Heart right ventricle (tissue), 16 donors: ENCODE measurements at regions of chr3 and their contacts with region 1.

Region 1: GRCh38 chr3:25427942-25428788 is at the start of gene RARB:
- DNase-seq: peak; percentile 59 to 84
- ATAC-seq: peak; percentile 91 to 95 (median 92)
- H3K4me3 ChIP-seq: peak within 1 kb of the TSS; percentile 56 to 81 (median 65)
- H3K27ac ChIP-seq: peak within 1 kb of the TSS; percentile 79 to 97 (median 94)
- H3K4me1 ChIP-seq: peaks cover 2 to 26% (median 15%) of the 10 kb centered on the region in 9 donors
- H3K27me3 ChIP-seq: peaks cover 0 to 32% (median 0%) of the 10 kb centered on the region in 7 donors
- CTCF ChIP-seq: no peak
- total RNA-seq, gene RARB: 8.6 to 23.2 (median 19.0) TPM

Region 2: DNA sequence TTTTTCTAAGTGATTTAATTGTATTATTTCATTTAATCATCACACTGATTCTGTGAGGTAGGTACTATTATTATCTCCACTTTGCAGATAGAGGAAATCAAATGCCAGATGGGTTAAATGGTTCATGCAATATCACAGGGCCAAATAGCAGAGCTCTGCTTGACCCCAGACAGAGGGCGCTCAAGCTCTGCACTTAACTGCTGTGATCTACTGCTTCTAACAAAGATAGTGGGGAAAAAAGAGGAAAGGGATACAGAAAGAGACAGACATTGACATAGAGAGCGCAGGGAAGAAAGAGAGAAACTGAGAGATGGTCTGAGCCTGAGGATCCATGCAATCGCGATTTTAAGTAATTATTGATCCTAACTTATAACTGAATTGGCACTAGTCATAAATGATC is 654.4 kb before region 1 on chr3:
- intact Hi-C with region 1: loop called in 1 of 10 experiments (anchors 5 kb)
- DNase-seq: peak; percentile 20 to 41
- ATAC-seq: peak; percentile 41 to 75 (median 60)
- H3K4me3 ChIP-seq: no peak overlapping the region
- H3K27ac ChIP-seq: no peak overlapping the region
- H3K4me1 ChIP-seq: no peaks in the 10 kb centered on the region
- H3K27me3 ChIP-seq: no peaks in the 10 kb centered on the region
- CTCF ChIP-seq: peak; percentile 57 to 86 (median 77)

Region 3: DNA sequence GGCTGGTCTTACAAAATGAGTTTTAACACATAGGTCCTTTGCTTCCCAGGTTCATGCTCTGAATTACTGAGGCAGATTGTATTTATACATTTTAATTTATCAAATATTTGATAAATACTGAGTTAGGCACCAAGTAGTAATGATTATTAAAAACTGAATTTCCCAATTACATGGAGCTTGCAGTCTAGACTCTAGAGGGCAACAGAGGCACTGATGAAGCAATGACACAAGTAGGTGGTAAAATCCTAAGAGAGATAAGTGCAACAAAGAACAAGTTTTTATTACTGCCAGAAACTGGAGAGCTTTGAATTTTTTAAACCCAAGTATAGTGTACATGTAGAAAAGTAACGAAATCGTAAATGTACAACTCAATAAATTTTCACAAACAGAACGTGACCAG is 406.3 kb before region 1 on chr3:
- intact Hi-C with region 1: loop called in 1 of 10 experiments (anchors 10 kb)
- DNase-seq: no peak
- ATAC-seq: peak in 4 of 8 donors; percentile 44 to 61 (median 59)
- H3K4me3 ChIP-seq: no peak overlapping the region
- H3K27ac ChIP-seq: no peak overlapping the region
- H3K4me1 ChIP-seq: no peaks in the 10 kb centered on the region
- H3K27me3 ChIP-seq: no peaks in the 10 kb centered on the region
- CTCF ChIP-seq: peak in 8 of 9 donors; percentile 30 to 74 (median 62)

Region 4: GRCh38 chr3:25044762-25045710 is 383.1 kb before region 1 on chr3:
- intact Hi-C with region 1: loop called in 2 of 10 experiments (anchors 10 kb)
- DNase-seq: peak in 1 of 2 donors; percentile 29
- ATAC-seq: peak; percentile 56 to 91 (median 85)
- H3K4me3 ChIP-seq: no peak overlapping the region
- H3K27ac ChIP-seq: peak overlapping the region in 9 of 10 donors; percentile 7 to 72 (median 24)
- H3K4me1 ChIP-seq: peaks cover 0 to 59% (median 27%) of the 10 kb centered on the region in 9 donors
- H3K27me3 ChIP-seq: no peaks in the 10 kb centered on the region
- CTCF ChIP-seq: no peak

Region 5: DNA sequence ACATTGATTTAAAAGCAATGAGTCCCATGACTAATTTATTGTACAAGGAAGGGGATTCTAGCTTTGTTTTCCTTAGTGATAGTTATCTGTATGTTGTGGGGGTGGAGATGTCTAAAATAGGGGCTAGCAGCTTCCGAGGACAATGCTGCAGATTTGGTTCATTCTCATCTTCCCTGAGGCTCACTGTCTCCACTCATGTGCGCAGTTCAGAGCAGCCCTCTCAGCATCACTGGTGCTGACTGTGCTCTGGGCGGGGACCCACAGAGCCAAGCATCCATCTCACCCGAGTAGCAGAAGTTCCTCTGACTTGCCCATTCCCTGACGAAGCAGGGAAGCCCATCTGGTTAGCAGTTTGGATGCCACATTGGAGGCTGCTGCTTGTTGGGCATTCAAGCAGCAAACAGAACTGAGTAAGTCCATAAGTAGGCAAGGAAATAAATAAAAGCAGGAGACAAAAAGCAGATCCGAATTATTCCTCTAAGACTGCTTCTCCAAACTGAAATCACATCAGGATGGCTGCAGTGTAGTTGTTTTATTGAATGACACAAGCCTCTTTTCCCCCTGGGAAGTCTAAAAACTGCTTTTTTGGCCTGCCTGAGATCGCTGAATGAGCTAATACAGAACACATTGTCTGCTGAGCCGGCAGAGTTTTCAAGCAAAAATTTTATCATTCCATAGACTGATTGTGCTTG is 27.4 kb after region 1 on chr3:
- intact Hi-C with region 1: loop called in 1 of 10 experiments (anchors 2 kb)
- DNase-seq: peak in 1 of 2 donors; percentile 40
- ATAC-seq: peak; percentile 56 to 84 (median 76)
- H3K4me3 ChIP-seq: peak overlapping the region in 3 of 10 donors; percentile 5 to 23 (median 18)
- H3K27ac ChIP-seq: peak overlapping the region; percentile 25 to 77 (median 72)
- H3K4me1 ChIP-seq: peaks cover 18 to 99% (median 68%) of the 10 kb centered on the region in 9 donors
- H3K27me3 ChIP-seq: no peaks in the 10 kb centered on the region
- CTCF ChIP-seq: no peak